GM12878 (cell line): ENCODE measurements at regions of chr6 and their contacts with region 1.

Region 1: DNA sequence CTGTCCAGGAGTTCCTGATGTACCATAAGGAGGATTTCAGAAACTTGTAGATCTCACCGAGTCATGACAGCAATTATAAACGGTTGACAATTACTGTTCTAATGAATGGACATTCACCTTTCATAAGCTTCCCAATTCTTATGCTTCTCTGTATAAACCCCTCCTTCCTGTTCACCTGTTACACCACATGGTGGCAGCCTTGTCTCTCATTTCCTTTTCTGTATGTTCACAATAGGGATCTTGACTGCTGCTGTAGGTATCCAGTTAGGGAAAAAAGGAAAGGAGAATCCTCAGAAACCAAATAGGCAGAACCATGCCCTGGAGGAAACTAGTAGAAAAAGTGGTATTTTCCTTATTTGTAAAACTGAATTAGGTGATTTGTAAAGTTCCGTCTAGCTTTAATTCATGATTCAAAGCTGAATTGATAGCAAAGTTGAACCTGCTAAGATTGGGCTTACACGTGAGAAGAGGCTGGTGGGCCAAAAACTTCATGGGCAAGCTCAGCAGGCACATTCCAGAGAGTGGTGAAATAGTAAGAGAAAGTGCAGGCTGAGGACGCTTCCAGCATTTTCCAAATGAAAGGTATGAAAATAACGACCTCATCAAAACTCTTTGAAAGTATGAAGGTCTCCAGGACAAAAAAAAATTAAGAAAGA is 29.0 kb upstream of the TBPL1 start:
- DNase-seq: peak; percentile 33
- ATAC-seq: peak; percentile 93
- H3K4me3 ChIP-seq: no peak overlapping the region
- H3K27ac ChIP-seq: no peak overlapping the region
- H3K4me1 ChIP-seq: no peaks in the 10 kb centered on the region
- H3K27me3 ChIP-seq: no peaks in the 10 kb centered on the region
- CTCF ChIP-seq: peak; percentile 78 to 93 (median 82)
- EP300 ChIP-seq: no peak
- POLR2A ChIP-seq: no peak
- RAD21 ChIP-seq: peak; percentile 100

Region 2: GRCh38 chr6:133871131-133871530 is 52.9 kb before region 1 on chr6:
- CTCF ChIA-PET with region 1: no interaction called
- POLR2A ChIA-PET with region 1: no interaction called
- RAD21 ChIA-PET with region 1: no interaction called
- SMC1A ChIA-PET with region 1: no interaction called
- in situ Hi-C with region 1: no loop called
- intact Hi-C with region 1: no loop called
- DNase-seq: no peak
- ATAC-seq: no peak
- H3K4me3 ChIP-seq: no peak overlapping the region
- H3K27ac ChIP-seq: no peak overlapping the region
- H3K4me1 ChIP-seq: no peaks in the 10 kb centered on the region
- H3K27me3 ChIP-seq: no peaks in the 10 kb centered on the region
- CTCF ChIP-seq: no peak
- EP300 ChIP-seq: no peak
- POLR2A ChIP-seq: no peak
- RAD21 ChIP-seq: no peak

Region 3: GRCh38 chr6:133952815-133953633 is 29.0 kb after region 1 on chr6 and contains the start of gene TBPL1:
- CTCF ChIA-PET with region 1: interaction called, 21 read pairs
- POLR2A ChIA-PET with region 1: no interaction called
- RAD21 ChIA-PET with region 1: interaction called, 6 read pairs
- SMC1A ChIA-PET with region 1: interaction called, 8 read pairs
- in situ Hi-C with region 1: no loop called
- intact Hi-C with region 1: no loop called
- DNase-seq: peak; percentile 90
- ATAC-seq: peak; percentile 88
- H3K4me3 ChIP-seq: peak within 1 kb of the TSS; percentile 88
- H3K27ac ChIP-seq: peak within 1 kb of the TSS; percentile 74
- H3K4me1 ChIP-seq: peaks cover 11% of the 10 kb centered on the region
- H3K27me3 ChIP-seq: no peaks in the 10 kb centered on the region
- CTCF ChIP-seq: no peak
- EP300 ChIP-seq: peak in 1 of 2 experiments; percentile 62; a peak in 1 of 4 replicates
- POLR2A ChIP-seq: peak; percentile 94
- RAD21 ChIP-seq: no peak
- polyA plus RNA-seq, gene TBPL1: 34.9 to 52.5 TPM

Region 4: GRCh38 chr6:133991096-133991593 is 67.1 kb after region 1 on chr6:
- CTCF ChIA-PET with region 1: interaction called, 11 read pairs
- POLR2A ChIA-PET with region 1: no interaction called
- RAD21 ChIA-PET with region 1: interaction called, 3 read pairs
- SMC1A ChIA-PET with region 1: no interaction called
- in situ Hi-C with region 1: no loop called
- intact Hi-C with region 1: no loop called
- DNase-seq: no peak
- ATAC-seq: no peak
- H3K4me3 ChIP-seq: no peak overlapping the region
- H3K27ac ChIP-seq: no peak overlapping the region
- H3K4me1 ChIP-seq: no peaks in the 10 kb centered on the region
- H3K27me3 ChIP-seq: no peaks in the 10 kb centered on the region
- CTCF ChIP-seq: no peak
- EP300 ChIP-seq: no peak
- POLR2A ChIP-seq: no peak
- RAD21 ChIP-seq: no peak

Region 5: DNA sequence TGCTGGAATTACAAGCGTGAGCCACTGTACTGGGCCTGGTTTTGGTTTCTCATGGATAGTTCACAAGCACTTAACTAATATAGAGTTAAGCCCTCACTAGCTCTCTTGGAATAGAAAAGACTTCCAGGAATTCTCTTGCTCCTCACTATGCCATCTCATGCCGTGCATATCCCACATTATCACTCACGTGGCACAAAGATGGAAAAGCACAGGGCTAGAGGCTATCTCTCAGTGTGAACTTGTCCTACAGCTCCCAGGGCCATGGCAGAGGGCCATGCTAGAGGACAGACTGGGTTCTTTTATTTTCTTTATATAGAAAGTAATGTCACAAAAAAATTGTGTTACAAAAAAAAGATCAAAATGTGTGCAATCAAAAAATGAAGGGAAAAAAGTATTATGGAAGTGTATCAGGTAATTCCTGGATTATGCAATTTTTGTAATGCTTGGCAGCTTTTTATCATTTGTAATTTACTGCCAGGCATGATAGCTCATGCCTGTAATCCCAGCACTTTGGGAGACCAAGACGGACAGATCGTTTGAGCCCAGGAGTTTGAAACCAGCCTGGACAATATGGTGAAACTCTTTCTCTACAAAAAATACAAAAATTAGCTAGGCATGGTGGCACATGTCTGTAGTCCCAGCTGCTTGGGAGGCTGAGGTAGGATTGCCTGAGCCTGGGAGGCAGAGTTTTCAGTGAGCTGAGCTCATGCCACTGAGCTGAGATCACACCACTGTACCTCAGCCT is 134.7 kb after region 1 on chr6:
- CTCF ChIA-PET with region 1: interaction called, 216 read pairs
- POLR2A ChIA-PET with region 1: no interaction called
- RAD21 ChIA-PET with region 1: interaction called, 35 read pairs
- SMC1A ChIA-PET with region 1: interaction called, 61 read pairs
- in situ Hi-C with region 1: loop called (anchors 10 kb)
- intact Hi-C with region 1: no loop called
- DNase-seq: no peak
- ATAC-seq: no peak
- H3K4me3 ChIP-seq: no peak overlapping the region
- H3K27ac ChIP-seq: no peak overlapping the region
- H3K4me1 ChIP-seq: no peaks in the 10 kb centered on the region
- H3K27me3 ChIP-seq: no peaks in the 10 kb centered on the region
- CTCF ChIP-seq: no peak
- EP300 ChIP-seq: no peak
- POLR2A ChIP-seq: no peak
- RAD21 ChIP-seq: no peak

Region 6: GRCh38 chr6:134097114-134097707 is 173.1 kb after region 1 on chr6:
- CTCF ChIA-PET with region 1: interaction called, 276 read pairs
- POLR2A ChIA-PET with region 1: no interaction called
- RAD21 ChIA-PET with region 1: interaction called, 133 read pairs
- SMC1A ChIA-PET with region 1: interaction called, 187 read pairs
- in situ Hi-C with region 1: loop called (anchors 5 kb)
- intact Hi-C with region 1: loop called (anchors 1 kb)
- DNase-seq: peak; percentile 3
- ATAC-seq: peak; percentile 66
- H3K4me3 ChIP-seq: no peak overlapping the region
- H3K27ac ChIP-seq: no peak overlapping the region
- H3K4me1 ChIP-seq: no peaks in the 10 kb centered on the region
- H3K27me3 ChIP-seq: no peaks in the 10 kb centered on the region
- CTCF ChIP-seq: peak; percentile 43 to 64 (median 54); a peak in 4 of 6 replicates
- EP300 ChIP-seq: no peak
- POLR2A ChIP-seq: no peak
- RAD21 ChIP-seq: peak; percentile 91